Calu3 (cell line): ENCODE measurements at regions of chr5 and their contacts with region 1.

Region 1: GRCh38 chr5:75473463-75473862 is 38.0 kb downstream of the CERT1 start:
- DNase-seq: no peak
- H3K4me3 Mint-ChIP-seq: no peak overlapping the region
- H3K27ac Mint-ChIP-seq: no peak overlapping the region
- H3K4me1 Mint-ChIP-seq: peaks cover 42% of the 10 kb centered on the region
- H3K27me3 Mint-ChIP-seq: no peaks in the 10 kb centered on the region
- CTCF ChIP-seq: no peak

Region 2: DNA sequence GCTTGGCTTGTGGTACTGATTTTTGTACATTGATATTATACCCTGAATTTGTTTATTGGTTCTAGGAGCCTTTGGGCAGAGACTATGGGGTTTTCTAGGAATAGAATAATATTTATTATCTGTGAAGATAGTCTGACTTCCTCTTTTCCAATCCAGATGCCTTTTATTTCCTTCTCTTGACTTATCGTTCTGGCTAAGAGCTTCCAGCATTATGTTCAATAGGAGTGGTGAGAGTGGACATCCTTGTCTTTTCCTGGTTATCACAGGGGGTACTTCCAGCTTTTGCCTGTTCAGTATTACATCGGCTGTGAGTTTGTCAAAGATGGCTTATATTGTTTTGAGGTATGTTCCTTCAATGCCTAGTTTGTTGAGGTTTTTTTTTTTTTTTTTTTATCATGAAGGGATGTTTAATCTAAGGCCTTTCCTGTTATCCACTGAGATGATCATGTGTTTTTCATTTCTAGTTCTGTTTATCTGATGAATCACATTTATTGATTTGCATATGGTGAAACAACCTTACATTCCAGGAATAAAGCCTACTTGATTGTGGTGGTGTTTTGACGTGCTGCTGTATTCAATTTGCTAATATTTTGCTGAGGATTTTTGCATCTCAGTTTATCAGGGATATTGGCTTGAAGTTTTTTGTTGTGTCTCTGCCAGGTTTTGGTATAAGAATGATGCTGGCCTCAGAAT is 39.5 kb before region 1 on chr5:
- CTCF ChIA-PET with region 1: no interaction called
- intact Hi-C with region 1: loop called (anchors 2 kb)
- DNase-seq: no peak
- H3K4me3 Mint-ChIP-seq: no peak overlapping the region
- H3K27ac Mint-ChIP-seq: peak overlapping the region; percentile 67
- H3K4me1 Mint-ChIP-seq: peaks cover 36% of the 10 kb centered on the region
- H3K27me3 Mint-ChIP-seq: no peaks in the 10 kb centered on the region
- CTCF ChIP-seq: no peak

Region 3: GRCh38 chr5:75720882-75721281 is 247.4 kb after region 1 on chr5:
- CTCF ChIA-PET with region 1: no interaction called
- intact Hi-C with region 1: no loop called
- DNase-seq: no peak
- H3K4me3 Mint-ChIP-seq: no peak overlapping the region
- H3K27ac Mint-ChIP-seq: no peak overlapping the region
- H3K4me1 Mint-ChIP-seq: peaks cover 11% of the 10 kb centered on the region
- H3K27me3 Mint-ChIP-seq: no peaks in the 10 kb centered on the region
- CTCF ChIP-seq: no peak